ENCODE measurements at regions of chr2 and their contacts with region 1.

Region 1: DNA sequence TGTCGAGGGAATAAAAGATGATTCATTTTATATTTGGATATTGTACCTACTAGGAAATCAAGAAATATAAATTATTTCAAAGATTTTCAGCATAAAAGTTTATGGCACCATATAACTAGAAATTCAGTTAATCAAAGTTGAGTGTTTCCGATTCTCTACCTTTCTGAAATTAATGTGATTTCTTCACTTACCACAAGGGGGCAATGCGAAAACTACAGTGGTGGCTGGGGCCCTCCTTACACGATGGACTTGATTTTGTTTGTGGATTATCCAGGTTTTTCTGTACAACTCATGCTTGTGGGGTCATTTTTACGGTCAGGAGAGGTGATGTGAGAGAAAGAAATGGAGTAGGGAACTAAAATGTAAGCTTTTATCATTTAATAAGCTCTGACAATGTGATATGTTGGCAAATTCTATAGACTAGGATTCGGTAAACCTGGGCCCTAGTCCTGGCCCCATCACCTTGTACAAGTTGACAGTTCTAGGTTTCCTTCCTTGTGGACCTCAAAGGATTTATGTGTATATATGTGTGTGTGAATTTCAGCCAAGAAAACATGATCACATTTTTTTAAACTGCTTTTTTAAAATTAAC is 47.6 kb downstream of the G6PC2 start:
- DNase-seq: peak; percentile 5 to 32
- ATAC-seq: peak in 1 of 2 experiments; percentile 87; a peak in 3 of 6 replicates
- H3K4me3 ChIP-seq: no peak overlapping the region
- H3K27ac ChIP-seq: no peak overlapping the region
- H3K4me1 ChIP-seq: no peaks in the 10 kb centered on the region
- CTCF ChIP-seq: peak; percentile 56
- EP300 ChIP-seq: no peak
- POLR2A ChIP-seq: no peak
- RAD21 ChIP-seq: peak; percentile 31 to 43; a peak in 3 of 5 replicates

Region 2: GRCh38 chr2:168935810-168936581 is 12.7 kb before region 1 on chr2:
- CTCF ChIA-PET with region 1: interaction called, 11 read pairs
- POLR2A ChIA-PET with region 1: no interaction called
- DNase-seq: no peak
- ATAC-seq: no peak
- H3K4me3 ChIP-seq: no peak overlapping the region
- H3K27ac ChIP-seq: no peak overlapping the region
- H3K4me1 ChIP-seq: no peaks in the 10 kb centered on the region
- CTCF ChIP-seq: no peak
- EP300 ChIP-seq: no peak
- POLR2A ChIP-seq: no peak
- RAD21 ChIP-seq: no peak

Region 3: DNA sequence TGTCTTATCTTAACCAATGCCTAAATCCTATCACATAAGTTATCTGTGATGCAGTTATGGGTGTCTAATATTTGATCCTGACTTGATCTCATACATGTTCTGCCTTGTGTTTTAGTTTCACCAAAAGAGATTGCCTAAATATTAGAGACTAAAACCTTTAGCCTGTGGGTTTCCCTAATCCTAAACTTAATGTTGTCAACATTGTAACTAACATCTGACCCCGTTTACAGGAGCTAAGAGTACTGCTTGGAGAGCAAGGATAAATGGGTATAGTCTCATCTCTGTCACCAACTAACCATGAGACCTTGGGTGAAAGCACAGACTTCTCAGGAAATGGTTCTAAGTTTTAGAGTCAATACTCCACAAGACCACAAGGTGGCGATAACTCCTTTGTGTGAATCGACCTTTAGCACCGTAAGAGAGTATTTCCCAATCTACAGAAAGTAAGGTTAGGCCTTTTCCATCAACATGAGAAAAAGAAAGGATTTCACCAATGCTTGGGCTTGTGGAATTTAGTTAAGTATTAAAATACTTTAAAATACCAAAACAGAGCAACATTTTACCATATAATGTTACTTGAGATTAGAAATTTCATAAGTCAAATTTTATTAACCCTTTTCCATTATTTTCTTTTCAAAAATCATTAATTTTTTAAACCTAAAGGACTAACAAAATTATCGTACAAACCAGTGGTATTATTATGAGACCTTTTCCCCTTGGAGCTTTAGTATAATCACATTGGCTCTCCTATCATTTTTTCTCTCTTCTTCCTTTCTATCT is 12.9 kb after region 1 on chr2:
- CTCF ChIA-PET with region 1: interaction called, 14 read pairs
- POLR2A ChIA-PET with region 1: no interaction called
- DNase-seq: peak; percentile 27 to 80
- ATAC-seq: peak; percentile 89 to 95
- H3K4me3 ChIP-seq: no peak overlapping the region
- H3K27ac ChIP-seq: no peak overlapping the region
- H3K4me1 ChIP-seq: no peaks in the 10 kb centered on the region
- CTCF ChIP-seq: peak; percentile 90
- EP300 ChIP-seq: no peak
- POLR2A ChIP-seq: no peak
- RAD21 ChIP-seq: peak; percentile 89 to 90

Region 4: DNA sequence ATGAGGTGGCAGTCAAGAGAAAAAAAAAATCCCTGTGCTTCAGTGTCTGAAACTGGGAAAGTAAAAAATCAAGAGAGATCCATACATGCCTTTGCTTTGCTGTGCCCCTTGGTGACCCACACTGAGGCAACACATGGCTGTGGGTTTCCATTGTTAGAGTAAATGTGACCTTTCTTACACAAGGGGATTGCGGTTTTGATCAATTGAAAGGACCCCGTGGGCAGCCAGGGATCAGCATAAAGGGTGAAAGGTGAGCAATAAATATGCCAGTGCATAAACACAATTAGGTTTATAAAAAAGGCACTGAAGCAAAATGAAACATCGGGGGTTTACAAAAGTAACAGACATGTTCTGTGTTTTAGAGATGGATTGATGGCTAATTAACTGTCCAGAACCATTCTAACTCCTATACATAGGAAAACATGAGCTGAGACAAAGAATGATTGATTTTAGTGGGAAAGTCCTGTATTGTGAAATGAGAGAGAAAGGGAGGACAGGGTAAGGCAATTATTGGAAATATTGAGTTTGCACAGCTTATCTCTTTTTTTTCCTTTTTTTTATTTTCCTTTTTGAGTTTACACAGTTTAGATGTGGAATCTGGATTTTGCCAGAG is 489.8 kb after region 1 on chr2:
- CTCF ChIA-PET with region 1: no interaction called
- POLR2A ChIA-PET with region 1: no interaction called
- DNase-seq: no peak
- ATAC-seq: no peak
- H3K4me3 ChIP-seq: no peak overlapping the region
- H3K27ac ChIP-seq: no peak overlapping the region
- H3K4me1 ChIP-seq: no peaks in the 10 kb centered on the region
- CTCF ChIP-seq: no peak
- EP300 ChIP-seq: no peak
- POLR2A ChIP-seq: no peak
- RAD21 ChIP-seq: no peak